ENCODE measurements at regions of chr17 and their contacts with region 1.

Region 1: GRCh38 chr17:2054512-2055291 is at the start of gene HIC1:
- DNase-seq: peak; percentile 96
- ATAC-seq: peak; percentile 51
- H3K4me3 Mint-ChIP-seq: peak within 1 kb of the TSS; percentile 85
- H3K27ac Mint-ChIP-seq: peak within 1 kb of the TSS; percentile 76
- H3K4me1 Mint-ChIP-seq: peaks cover 18% of the 10 kb centered on the region
- H3K27me3 Mint-ChIP-seq: peaks cover 14% of the 10 kb centered on the region
- total RNA-seq, gene HIC1: 62.1 to 64.3 TPM

Region 2: DNA sequence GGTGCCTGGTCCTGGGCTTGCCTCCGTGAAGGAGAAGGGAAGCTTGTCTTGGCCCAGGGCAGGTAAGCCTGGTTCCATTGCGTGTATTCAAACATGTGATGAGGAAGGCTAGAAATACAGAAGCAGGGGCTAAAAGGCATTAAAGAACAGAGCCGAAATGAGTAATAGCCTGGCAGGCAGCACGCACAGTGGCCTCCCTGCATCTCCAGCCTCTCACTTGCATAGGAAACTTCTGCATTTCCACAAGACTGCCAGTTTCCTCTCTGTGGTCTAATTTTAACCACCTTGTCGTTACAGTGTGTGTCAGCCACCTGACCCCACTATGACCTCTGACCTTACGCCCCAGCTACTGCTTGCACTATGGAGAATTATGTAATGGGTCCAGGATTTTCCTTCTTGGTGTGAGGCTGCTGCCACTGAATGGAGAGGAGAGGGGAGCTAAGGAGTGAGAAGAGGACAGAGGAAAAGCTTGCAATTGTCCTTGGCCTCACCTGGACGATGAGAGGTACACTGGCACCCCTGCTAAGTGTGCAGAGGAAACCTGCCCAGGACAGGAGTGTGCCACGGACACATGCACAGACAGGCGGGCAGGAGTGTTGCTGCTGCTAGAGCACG is 33.0 kb after region 1 on chr17:
- POLR2A ChIA-PET with region 1: interaction called, 10 read pairs
- DNase-seq: no peak
- ATAC-seq: peak; percentile 40
- H3K4me3 Mint-ChIP-seq: peak overlapping the region; percentile 74
- H3K27ac Mint-ChIP-seq: peak overlapping the region; percentile 74
- H3K4me1 Mint-ChIP-seq: peaks cover 74% of the 10 kb centered on the region
- H3K27me3 Mint-ChIP-seq: no peaks in the 10 kb centered on the region

Region 3: GRCh38 chr17:2253768-2254406 is 199.2 kb after region 1 on chr17:
- POLR2A ChIA-PET with region 1: interaction called, 25 read pairs
- DNase-seq: no peak
- ATAC-seq: peak; percentile 85
- H3K4me3 Mint-ChIP-seq: peak overlapping the region; percentile 67
- H3K27ac Mint-ChIP-seq: peak overlapping the region; percentile 92
- H3K4me1 Mint-ChIP-seq: peaks cover 60% of the 10 kb centered on the region
- H3K27me3 Mint-ChIP-seq: no peaks in the 10 kb centered on the region

Region 4: GRCh38 chr17:2266045-2266864 is 211.6 kb after region 1 on chr17:
- POLR2A ChIA-PET with region 1: interaction called, 86 read pairs
- DNase-seq: peak; percentile 75
- ATAC-seq: peak; percentile 78
- H3K4me3 Mint-ChIP-seq: peak overlapping the region; percentile 85
- H3K27ac Mint-ChIP-seq: peak overlapping the region; percentile 98
- H3K4me1 Mint-ChIP-seq: peaks cover 73% of the 10 kb centered on the region
- H3K27me3 Mint-ChIP-seq: no peaks in the 10 kb centered on the region

Region 5: DNA sequence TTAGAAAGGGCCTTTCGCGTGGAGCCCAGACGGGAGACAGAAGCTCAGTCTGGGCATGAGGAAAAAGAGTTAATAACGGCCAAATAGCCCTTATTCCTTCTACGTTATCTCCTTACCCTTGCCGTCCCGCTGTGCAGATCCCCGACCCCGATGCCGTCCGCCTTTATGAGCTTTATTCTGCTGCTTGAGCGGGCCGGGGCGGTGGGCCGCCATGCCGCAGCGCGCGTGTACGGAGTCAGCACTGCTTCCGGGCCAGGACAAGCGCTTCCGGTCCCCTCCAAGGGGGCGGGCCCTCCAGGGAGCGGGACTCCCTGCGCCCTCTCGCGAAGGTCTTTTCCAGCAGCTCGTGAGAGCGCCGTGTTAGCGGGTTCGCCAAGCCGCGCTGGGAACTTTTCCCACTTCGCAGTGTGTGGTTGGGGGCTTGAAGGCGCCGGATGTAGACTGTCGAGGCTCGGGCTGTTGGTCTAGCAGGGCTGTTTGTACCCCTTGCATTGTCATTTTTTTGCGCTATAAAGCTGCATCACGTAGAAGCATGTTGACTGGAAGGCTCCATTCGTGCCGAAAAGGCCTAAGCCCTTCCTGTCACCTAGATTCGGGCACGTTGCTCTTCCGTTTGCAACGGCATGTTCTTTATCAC is 281.6 kb after region 1 on chr17 and contains the start of gene TSR1:
- POLR2A ChIA-PET with region 1: interaction called, 20 read pairs
- DNase-seq: peak; percentile 90
- ATAC-seq: peak; percentile 87
- H3K4me3 Mint-ChIP-seq: peak within 1 kb of the TSS; percentile 98
- H3K27ac Mint-ChIP-seq: peak within 1 kb of the TSS; percentile 91
- H3K4me1 Mint-ChIP-seq: peaks cover 17% of the 10 kb centered on the region
- H3K27me3 Mint-ChIP-seq: no peaks in the 10 kb centered on the region
- total RNA-seq, gene TSR1: 27.8 to 30.2 TPM

Measured in activated naive CD8-positive, alpha-beta T cell treated with anti-CD3 and anti-CD28 coated beads, Interleukin-2, amount 10 ng/mL, durations not matched to agents 7 days and 5 days (primary cell).